Mammary epithelial cell (primary cell): ENCODE measurements at regions of chr20 and their contacts with region 1.

Region 1: DNA sequence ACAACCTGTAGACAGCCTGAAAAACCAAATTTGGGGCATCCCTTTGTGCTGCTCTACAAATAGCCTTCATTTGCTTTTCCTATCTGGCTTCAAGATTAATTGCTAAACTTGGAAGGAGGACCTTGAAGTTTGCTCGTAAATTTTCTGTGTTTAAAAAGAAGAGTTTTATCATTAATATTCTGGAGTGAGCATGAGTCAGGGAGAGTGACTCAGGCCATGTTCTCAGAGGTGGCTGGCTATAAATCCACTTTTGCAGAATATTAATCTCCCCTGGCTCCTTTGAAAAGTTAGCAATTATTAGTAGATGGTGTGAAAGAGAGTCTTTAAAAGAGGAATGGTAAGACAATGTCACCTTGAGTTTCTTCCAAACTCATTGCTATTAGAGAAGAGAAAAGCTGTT is 91.0 kb downstream of the ANKEF1 start:
- DNase-seq: no peak
- H3K4me3 ChIP-seq: no peak overlapping the region
- H3K27ac ChIP-seq: no peak overlapping the region
- H3K4me1 ChIP-seq: no peaks in the 10 kb centered on the region
- H3K27me3 ChIP-seq: peaks cover 2% of the 10 kb centered on the region
- CTCF ChIP-seq: no peak

Region 2: GRCh38 chr20:10171864-10172751 is 46.4 kb after region 1 on chr20:
- CTCF ChIA-PET with region 1: no interaction called
- dilution Hi-C with region 1: no loop called
- in situ Hi-C with region 1: no loop called
- intact Hi-C with region 1: loop called (anchors 5 kb)
- DNase-seq: peak; percentile 9
- H3K4me3 ChIP-seq: peak overlapping the region; percentile 10 to 45 (median 42)
- H3K27ac ChIP-seq: no peak overlapping the region
- H3K4me1 ChIP-seq: peaks cover 4% of the 10 kb centered on the region
- H3K27me3 ChIP-seq: peaks cover 5% of the 10 kb centered on the region
- CTCF ChIP-seq: no peak

Region 3: DNA sequence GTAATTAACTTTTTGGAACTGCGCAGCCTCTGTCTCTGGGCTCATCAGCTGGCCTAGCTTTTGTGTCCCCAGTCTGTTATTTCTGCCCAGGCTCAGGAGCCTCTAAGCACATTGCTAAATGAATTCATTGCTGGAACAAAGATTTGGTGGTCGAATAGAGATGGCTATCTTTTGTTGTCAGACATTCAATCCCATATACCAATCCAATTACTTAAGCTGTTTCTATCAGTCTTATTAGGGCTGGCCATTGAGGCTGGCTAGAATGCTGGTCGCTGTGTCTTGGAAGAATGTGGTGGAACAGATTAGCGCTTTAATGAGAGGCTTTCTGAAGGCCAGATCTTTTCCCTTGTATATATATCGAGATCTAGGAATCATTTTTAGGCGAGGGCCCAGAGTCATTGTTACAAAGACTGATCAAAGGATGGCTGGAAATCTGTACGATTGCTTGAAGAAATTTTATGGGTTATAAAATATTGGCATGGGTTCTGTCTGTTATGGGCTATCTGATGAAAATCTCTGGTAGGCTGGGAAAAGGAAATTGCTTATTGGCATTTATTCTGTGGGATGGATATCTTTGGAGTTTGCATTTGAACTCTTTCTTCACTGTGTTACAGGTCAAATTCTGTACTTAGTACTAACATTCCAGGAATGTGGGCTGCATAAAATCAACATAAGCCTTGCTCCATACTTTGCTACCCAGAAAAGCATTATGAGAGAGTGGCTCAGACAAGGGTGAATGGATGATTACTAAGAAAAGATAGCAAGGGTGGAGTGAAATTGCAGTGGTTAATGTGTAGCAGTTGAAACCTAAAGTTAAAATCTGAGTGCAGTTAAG is 582.8 kb after region 1 on chr20:
- CTCF ChIA-PET with region 1: no interaction called
- dilution Hi-C with region 1: no loop called
- in situ Hi-C with region 1: no loop called
- intact Hi-C with region 1: no loop called
- DNase-seq: peak; percentile 66
- H3K4me3 ChIP-seq: no peak overlapping the region
- H3K27ac ChIP-seq: no peak overlapping the region
- H3K4me1 ChIP-seq: peaks cover 15% of the 10 kb centered on the region
- H3K27me3 ChIP-seq: no peaks in the 10 kb centered on the region
- CTCF ChIP-seq: no peak